Dorsolateral prefrontal cortex (tissue), 120 donors: ENCODE measurements at regions of chr19 and their contacts with region 1.

Region 1: DNA sequence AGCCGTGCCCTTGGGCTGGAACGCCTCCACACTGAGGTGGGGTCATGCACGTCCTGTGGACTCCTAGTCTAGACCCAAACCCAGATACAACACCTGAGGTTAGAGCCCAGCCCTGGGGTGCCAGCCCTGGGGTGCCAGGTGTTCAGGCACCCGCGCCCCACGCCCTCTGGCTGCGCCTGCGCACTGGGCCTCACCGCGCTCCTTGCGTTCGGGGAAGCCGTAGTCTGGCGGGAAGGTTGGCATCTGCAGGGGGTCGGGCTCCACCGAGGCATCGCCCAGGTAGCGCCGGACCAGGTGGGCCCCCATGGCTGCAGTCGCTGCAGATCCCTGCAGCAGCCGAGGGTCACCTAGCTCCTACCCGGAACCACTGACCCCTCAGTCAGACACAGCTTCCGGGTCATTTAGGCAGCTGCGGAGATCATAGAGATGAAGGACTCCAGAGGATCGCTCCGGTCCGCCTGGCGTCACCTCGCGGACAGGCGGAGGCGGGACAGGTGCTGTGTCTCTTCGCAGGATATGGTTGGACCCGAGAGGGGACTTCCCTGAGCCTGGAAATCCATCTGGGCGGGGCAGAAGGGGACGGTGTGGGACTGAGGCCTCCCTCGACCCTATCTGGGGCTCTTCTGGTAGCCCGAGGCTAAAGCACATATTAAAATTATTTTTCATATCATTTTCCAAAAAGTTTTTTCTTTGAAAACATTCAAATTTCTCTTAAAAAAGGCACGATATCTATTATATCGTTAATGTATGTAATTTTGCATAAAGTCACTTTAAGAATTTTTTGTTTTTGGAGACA is at the start of gene NDUFB7:
- DNase-seq: peak; percentile 87 to 97 (median 95)
- H3K4me3 ChIP-seq: peak within 1 kb of the TSS; percentile 61 to 100 (median 93)
- H3K27ac ChIP-seq: peak within 1 kb of the TSS; percentile 51 to 99 (median 90)
- H3K27me3 ChIP-seq: no peaks in the 10 kb centered on the region
- CTCF ChIP-seq: peak; percentile 82 to 100 (median 97)
- total RNA-seq, gene NDUFB7: 107 to 236 (median 166) TPM

Region 2: DNA sequence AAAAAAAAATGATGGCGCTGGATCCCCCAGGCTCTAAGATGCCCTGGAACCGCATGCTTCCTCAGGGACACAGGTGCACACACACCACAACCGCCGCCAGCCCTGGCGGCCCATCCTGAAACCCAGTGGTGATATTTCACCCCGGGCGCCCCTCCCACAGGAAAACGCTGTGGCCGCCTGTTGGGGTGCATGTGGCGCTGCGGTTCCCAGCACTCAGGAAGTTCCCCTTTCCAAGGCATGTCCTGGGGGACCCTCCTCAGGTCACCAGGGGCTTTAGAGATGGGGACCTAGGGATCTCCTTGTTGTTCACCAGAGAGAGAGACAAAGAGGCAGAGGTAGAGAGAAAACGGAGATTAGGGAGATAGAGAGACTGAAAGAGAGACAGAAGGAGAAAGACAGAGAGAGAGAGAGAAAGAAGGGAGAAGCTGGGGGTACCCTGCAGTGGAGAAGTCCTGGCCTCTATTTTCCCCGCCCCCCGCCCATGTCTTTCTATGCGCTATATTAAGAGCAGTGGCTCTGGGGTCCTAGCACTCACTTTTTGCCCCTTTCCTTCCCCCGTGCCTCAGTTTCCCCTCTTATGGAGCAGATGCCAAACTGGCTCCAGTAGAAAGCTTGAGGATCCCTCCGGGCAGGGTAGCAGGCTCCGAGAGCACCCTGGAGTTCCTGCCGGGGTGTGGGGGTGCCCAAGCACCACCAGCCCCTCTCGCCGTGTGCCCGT is 204.1 kb after region 1 on chr19:
- intact Hi-C with region 1: loop called in 1 of 2 experiments (anchors 10 kb)
- DNase-seq: peak in 2 of 10 donors; percentile 8 to 49
- H3K4me3 ChIP-seq: peak overlapping the region; percentile 19 to 72 (median 54)
- H3K27ac ChIP-seq: peak overlapping the region in 43 of 59 donors; percentile 10 to 85 (median 61)
- H3K27me3 ChIP-seq: peaks cover 0 to 35% (median 3%) of the 10 kb centered on the region in 45 donors
- CTCF ChIP-seq: peak in 2 of 56 donors; percentile 5 to 15

Region 3: DNA sequence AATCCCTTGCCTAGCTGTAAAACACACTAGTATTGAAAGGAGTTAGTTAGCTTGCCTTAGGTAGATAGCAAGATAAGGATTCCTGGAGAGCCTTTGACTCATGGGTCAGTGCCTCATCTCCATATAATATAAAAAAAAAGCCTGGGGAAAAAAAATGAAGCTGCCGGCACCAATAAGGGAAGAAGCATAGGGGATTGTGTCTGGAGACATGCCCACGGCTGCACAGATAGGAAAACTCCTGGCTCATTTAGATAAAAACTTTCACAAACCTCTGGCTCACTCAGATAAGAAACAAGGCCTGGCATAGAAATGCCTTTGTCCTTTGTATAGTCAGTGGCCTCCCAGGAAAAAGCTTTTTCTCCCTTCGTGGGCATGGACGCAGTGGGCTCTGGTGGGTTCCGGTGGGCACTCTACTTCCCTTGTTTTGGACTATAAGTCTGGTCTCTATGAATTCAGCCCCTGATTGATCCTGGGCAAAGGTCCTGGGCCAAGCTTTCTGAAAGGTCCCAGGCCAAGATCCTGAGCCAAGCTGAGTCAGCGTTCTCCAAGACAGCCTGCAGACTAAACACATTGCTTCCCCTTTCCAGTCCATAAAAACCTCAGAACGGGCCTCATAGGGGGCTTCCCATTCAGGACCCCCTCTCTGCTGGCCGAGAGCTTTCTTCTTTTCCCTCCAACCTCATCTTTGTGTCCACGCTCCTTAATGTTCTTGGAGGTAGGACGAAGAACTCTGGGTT is 318.9 kb after region 1 on chr19:
- intact Hi-C with region 1: loop called in 1 of 2 experiments (anchors 5 kb)
- DNase-seq: no peak
- H3K4me3 ChIP-seq: no peak overlapping the region
- H3K27ac ChIP-seq: peak overlapping the region in 1 of 59 donors; percentile 17
- H3K27me3 ChIP-seq: peaks cover 0 to 41% (median 4%) of the 10 kb centered on the region in 45 donors
- CTCF ChIP-seq: no peak